CD8-positive, alpha-beta T cell (primary cell): ENCODE measurements at regions of chr20 and their contacts with region 1.

Region 1: GRCh38 chr20:50189681-50190582 is 698 bp upstream of the CEBPB start:
- DNase-seq: peak; percentile 61 to 89 (median 83)
- ATAC-seq: peak; percentile 60
- H3K4me3 ChIP-seq: peak overlapping the region; percentile 29 to 72
- H3K4me3 Mint-ChIP-seq: peak overlapping the region; percentile 65
- H3K27ac ChIP-seq: peak overlapping the region; percentile 19 to 91
- H3K27ac Mint-ChIP-seq: peak overlapping the region; percentile 45
- H3K4me1 ChIP-seq: peaks cover 19% of the 10 kb centered on the region
- H3K4me1 Mint-ChIP-seq: peaks cover 24% of the 10 kb centered on the region
- H3K27me3 ChIP-seq: no peaks in the 10 kb centered on the region
- H3K27me3 Mint-ChIP-seq: peaks cover 8% of the 10 kb centered on the region
- CTCF ChIP-seq: peak; percentile 65

Region 2: DNA sequence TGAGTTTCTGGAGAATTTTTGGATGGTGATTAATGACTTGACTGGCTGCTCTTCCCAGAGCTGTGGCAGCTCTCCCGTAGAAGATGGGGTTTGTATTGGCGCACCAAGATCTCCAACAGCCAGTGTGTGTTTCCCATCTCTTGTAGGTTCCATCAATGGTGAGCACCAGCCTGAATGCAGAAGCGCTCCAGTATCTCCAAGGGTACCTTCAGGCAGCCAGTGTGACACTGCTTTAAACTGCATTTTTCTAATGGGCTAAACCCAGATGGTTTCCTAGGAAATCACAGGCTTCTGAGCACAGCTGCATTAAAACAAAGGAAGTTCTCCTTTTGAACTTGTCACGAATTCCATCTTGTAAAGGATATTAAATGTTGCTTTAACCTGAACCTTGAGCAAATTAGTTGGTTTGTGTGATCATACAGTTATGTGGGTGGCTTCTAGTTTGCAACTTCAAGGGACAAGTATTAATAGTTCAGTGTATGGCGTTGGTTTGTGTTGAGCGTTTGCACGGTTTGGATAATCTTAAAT is 1093.7 kb before region 1 on chr20:
- CTCF ChIA-PET with region 1: no interaction called
- POLR2A ChIA-PET with region 1: no interaction called
- intact Hi-C with region 1: no loop called
- DNase-seq: no peak
- ATAC-seq: no peak
- H3K4me3 ChIP-seq: no peak overlapping the region
- H3K4me3 Mint-ChIP-seq: no peak overlapping the region
- H3K27ac ChIP-seq: no peak overlapping the region
- H3K27ac Mint-ChIP-seq: no peak overlapping the region
- H3K4me1 ChIP-seq: no peaks in the 10 kb centered on the region
- H3K4me1 Mint-ChIP-seq: peaks cover 9% of the 10 kb centered on the region
- H3K27me3 ChIP-seq: no peaks in the 10 kb centered on the region
- H3K27me3 Mint-ChIP-seq: no peaks in the 10 kb centered on the region
- CTCF ChIP-seq: no peak

Region 3: GRCh38 chr20:49747707-49748524 is 442.0 kb before region 1 on chr20:
- CTCF ChIA-PET with region 1: no interaction called
- POLR2A ChIA-PET with region 1: no interaction called
- intact Hi-C with region 1: no loop called
- DNase-seq: no peak
- ATAC-seq: no peak
- H3K4me3 ChIP-seq: no peak overlapping the region
- H3K4me3 Mint-ChIP-seq: no peak overlapping the region
- H3K27ac ChIP-seq: no peak overlapping the region
- H3K27ac Mint-ChIP-seq: no peak overlapping the region
- H3K4me1 ChIP-seq: peaks cover 4% of the 10 kb centered on the region
- H3K4me1 Mint-ChIP-seq: peaks cover 8% of the 10 kb centered on the region
- H3K27me3 ChIP-seq: no peaks in the 10 kb centered on the region
- H3K27me3 Mint-ChIP-seq: peaks cover 6% of the 10 kb centered on the region
- CTCF ChIP-seq: no peak

Region 4: GRCh38 chr20:50120897-50121693 is 68.8 kb before region 1 on chr20:
- CTCF ChIA-PET with region 1: interaction called, 10 read pairs
- POLR2A ChIA-PET with region 1: interaction called, 4 read pairs
- intact Hi-C with region 1: no loop called
- DNase-seq: peak; percentile 39 to 81 (median 65)
- ATAC-seq: peak; percentile 86
- H3K4me3 ChIP-seq: no peak overlapping the region
- H3K4me3 Mint-ChIP-seq: no peak overlapping the region
- H3K27ac ChIP-seq: no peak overlapping the region
- H3K27ac Mint-ChIP-seq: no peak overlapping the region
- H3K4me1 ChIP-seq: peaks cover 8% of the 10 kb centered on the region
- H3K4me1 Mint-ChIP-seq: peaks cover 8% of the 10 kb centered on the region
- H3K27me3 ChIP-seq: no peaks in the 10 kb centered on the region
- H3K27me3 Mint-ChIP-seq: no peaks in the 10 kb centered on the region
- CTCF ChIP-seq: peak; percentile 76

Region 5: GRCh38 chr20:50460460-50461267 is 270.7 kb after region 1 on chr20:
- CTCF ChIA-PET with region 1: interaction called, 325 read pairs
- POLR2A ChIA-PET with region 1: interaction called, 4 read pairs
- intact Hi-C with region 1: loop called (anchors 1 kb)
- DNase-seq: peak; percentile 65 to 85 (median 81)
- ATAC-seq: peak; percentile 91
- H3K4me3 ChIP-seq: no peak overlapping the region
- H3K4me3 Mint-ChIP-seq: no peak overlapping the region
- H3K27ac ChIP-seq: no peak overlapping the region
- H3K27ac Mint-ChIP-seq: no peak overlapping the region
- H3K4me1 ChIP-seq: peaks cover 3% of the 10 kb centered on the region
- H3K4me1 Mint-ChIP-seq: peaks cover 4% of the 10 kb centered on the region
- H3K27me3 ChIP-seq: peaks cover 0 to 5% of the 10 kb centered on the region in 2 experiments
- H3K27me3 Mint-ChIP-seq: peaks cover 12% of the 10 kb centered on the region
- CTCF ChIP-seq: peak; percentile 72

Region 6: GRCh38 chr20:50575847-50576720 is 386.2 kb after region 1 on chr20:
- CTCF ChIA-PET with region 1: interaction called, 6 read pairs
- POLR2A ChIA-PET with region 1: no interaction called
- intact Hi-C with region 1: loop called (anchors 1 kb)
- DNase-seq: peak; percentile 38 to 77 (median 61)
- ATAC-seq: peak; percentile 76
- H3K4me3 ChIP-seq: no peak overlapping the region
- H3K4me3 Mint-ChIP-seq: no peak overlapping the region
- H3K27ac ChIP-seq: no peak overlapping the region
- H3K27ac Mint-ChIP-seq: peak overlapping the region; percentile 78
- H3K4me1 ChIP-seq: peaks cover 3% of the 10 kb centered on the region
- H3K4me1 Mint-ChIP-seq: peaks cover 22% of the 10 kb centered on the region
- H3K27me3 ChIP-seq: no peaks in the 10 kb centered on the region
- H3K27me3 Mint-ChIP-seq: no peaks in the 10 kb centered on the region
- CTCF ChIP-seq: no peak

Region 7: GRCh38 chr20:50731055-50731871 is 541.3 kb after region 1 on chr20 and contains the start of gene PARD6B:
- CTCF ChIA-PET with region 1: no interaction called
- POLR2A ChIA-PET with region 1: no interaction called
- intact Hi-C with region 1: loop called (anchors 2 kb)
- DNase-seq: peak; percentile 98 to 100 (median 99)
- ATAC-seq: peak; percentile 96
- H3K4me3 ChIP-seq: peak within 1 kb of the TSS; percentile 72 to 81
- H3K4me3 Mint-ChIP-seq: peak within 1 kb of the TSS; percentile 91
- H3K27ac ChIP-seq: peak within 1 kb of the TSS; percentile 51 to 54
- H3K27ac Mint-ChIP-seq: peak within 1 kb of the TSS; percentile 86
- H3K4me1 ChIP-seq: peaks cover 16% of the 10 kb centered on the region
- H3K4me1 Mint-ChIP-seq: peaks cover 34% of the 10 kb centered on the region
- H3K27me3 ChIP-seq: no peaks in the 10 kb centered on the region
- H3K27me3 Mint-ChIP-seq: no peaks in the 10 kb centered on the region
- CTCF ChIP-seq: no peak
- total RNA-seq, gene PARD6B: 5.6 to 6.3 TPM

Region 8: GRCh38 chr20:50958615-50959542 is 768.9 kb after region 1 on chr20 and contains the start of gene MOCS3:
- CTCF ChIA-PET with region 1: no interaction called
- POLR2A ChIA-PET with region 1: interaction called, 3 read pairs
- intact Hi-C with region 1: loop called (anchors 2 to 5 kb)
- DNase-seq: peak; percentile 65 to 95 (median 82)
- ATAC-seq: peak; percentile 77
- H3K4me3 ChIP-seq: peak within 1 kb of the TSS; percentile 73 to 87
- H3K4me3 Mint-ChIP-seq: peak within 1 kb of the TSS; percentile 97
- H3K27ac ChIP-seq: peak within 1 kb of the TSS; percentile 89 to 99
- H3K27ac Mint-ChIP-seq: peak within 1 kb of the TSS; percentile 99
- H3K4me1 ChIP-seq: peaks cover 38% of the 10 kb centered on the region
- H3K4me1 Mint-ChIP-seq: peaks cover 64% of the 10 kb centered on the region
- H3K27me3 ChIP-seq: no peaks in the 10 kb centered on the region
- H3K27me3 Mint-ChIP-seq: no peaks in the 10 kb centered on the region
- CTCF ChIP-seq: no peak
- total RNA-seq, gene MOCS3: 3.6 to 4.1 TPM

Region 9: DNA sequence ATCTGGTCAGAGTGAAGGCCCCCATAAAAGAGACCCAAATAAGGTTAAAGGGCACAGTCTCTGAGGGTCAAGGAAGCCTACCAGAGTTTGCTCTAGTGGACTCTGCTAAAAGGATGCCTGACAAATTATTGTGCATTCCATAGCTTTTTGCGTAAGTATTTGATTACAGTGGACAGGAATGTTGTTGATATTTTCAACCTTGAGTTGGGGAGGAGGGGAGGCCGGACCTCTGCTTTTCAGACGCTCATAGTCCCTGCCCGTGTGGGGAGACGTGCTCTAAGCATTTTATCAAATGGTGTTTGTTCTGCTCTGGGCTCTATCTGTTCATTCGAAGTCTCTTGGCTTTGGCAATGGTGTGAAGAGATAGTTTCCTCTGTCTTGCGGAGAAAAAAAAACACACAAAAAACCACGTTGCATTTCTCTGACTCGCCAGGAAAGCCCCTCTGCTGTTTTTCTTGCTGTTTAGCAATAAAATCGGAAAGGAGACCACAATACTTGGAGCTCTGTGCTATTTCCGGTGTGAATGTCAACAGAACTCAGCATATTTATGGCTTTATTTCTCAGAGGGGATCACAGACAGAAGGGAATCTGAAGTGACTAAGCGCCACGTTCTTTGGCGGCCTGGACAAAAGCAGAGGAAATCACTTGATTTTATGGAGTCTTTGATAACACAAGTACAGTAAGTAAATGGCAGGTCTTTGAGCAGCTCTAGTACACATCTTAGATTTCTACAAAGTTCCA is 1841.8 kb after region 1 on chr20:
- CTCF ChIA-PET with region 1: no interaction called
- POLR2A ChIA-PET with region 1: no interaction called
- intact Hi-C with region 1: no loop called
- DNase-seq: peak in 5 of 9 experiments; percentile 3 to 84 (median 22)
- ATAC-seq: peak; percentile 80
- H3K4me3 ChIP-seq: no peak overlapping the region
- H3K4me3 Mint-ChIP-seq: no peak overlapping the region
- H3K27ac ChIP-seq: peak overlapping the region in 1 of 2 experiments; percentile 65
- H3K27ac Mint-ChIP-seq: peak overlapping the region; percentile 80
- H3K4me1 ChIP-seq: peaks cover 17% of the 10 kb centered on the region
- H3K4me1 Mint-ChIP-seq: peaks cover 22% of the 10 kb centered on the region
- H3K27me3 ChIP-seq: no peaks in the 10 kb centered on the region
- H3K27me3 Mint-ChIP-seq: no peaks in the 10 kb centered on the region
- CTCF ChIP-seq: no peak